ENCODE measurements at regions of chr2 and their contacts with region 1.

Region 1: GRCh38 chr2:97713296-97714083 is at the start of gene ZAP70:
- DNase-seq: no peak
- ATAC-seq: no peak
- total RNA-seq, gene ZAP70: 1.6 TPM

Region 2: GRCh38 chr2:97745474-97746174 is 32.1 kb after region 1 on chr2:
- intact Hi-C with region 1: loop called (anchors 5 kb)
- DNase-seq: no peak
- ATAC-seq: no peak

Region 3: GRCh38 chr2:97945791-97946190 is 232.3 kb after region 1 on chr2:
- intact Hi-C with region 1: no loop called
- DNase-seq: no peak
- ATAC-seq: no peak

Region 4: GRCh38 chr2:98524168-98524567 is 810.7 kb after region 1 on chr2:
- intact Hi-C with region 1: no loop called
- DNase-seq: no peak
- ATAC-seq: no peak

Measured in Right ventricle myocardium inferior (tissue), 1 donor.